ENCODE measurements at regions of chrX and their contacts with region 1.

Region 1: DNA sequence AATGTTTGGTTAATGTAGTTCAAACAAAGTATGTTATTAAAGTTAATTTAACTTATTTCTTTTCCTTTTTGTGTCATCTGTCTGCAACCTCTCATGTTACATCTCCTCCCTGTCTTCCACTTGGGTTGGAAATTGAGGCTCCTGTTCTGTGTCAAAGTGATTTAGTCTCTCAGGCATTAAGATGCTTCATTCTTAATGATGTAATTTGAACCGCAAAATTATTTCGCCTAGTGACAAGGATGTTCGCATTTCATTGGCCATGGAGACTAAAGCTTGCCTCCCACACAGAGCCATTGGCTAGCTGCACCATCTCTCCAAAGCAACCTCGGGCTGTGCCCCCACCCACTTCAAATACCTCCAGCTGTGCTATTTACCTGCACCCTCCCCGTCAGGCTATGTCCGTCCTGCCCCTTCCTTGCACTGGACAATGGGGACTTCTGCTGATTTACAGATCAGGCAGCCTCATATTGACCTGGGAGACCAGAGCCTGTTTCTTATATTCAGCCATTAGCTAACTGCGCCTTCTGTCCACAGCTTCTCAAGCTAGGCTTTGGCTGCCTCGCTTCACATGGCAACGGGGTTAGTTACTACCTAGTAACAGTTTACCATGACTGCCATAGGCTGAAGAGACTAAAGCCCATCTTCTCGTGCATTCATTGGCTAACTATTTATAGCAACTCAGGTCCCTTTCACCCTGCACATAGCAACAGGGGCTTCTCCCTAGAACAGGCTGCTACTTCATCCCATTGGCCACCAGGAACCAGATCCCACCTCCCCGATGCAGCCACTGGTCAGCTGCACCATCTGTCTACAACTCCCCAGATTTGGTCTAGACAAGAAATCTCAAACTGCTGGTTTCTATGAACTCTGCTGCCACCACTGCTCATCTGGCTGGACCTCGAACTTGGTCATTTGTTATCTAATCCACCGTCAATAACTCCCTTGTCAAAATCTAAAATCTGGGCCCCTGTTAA is 8.6 kb upstream of the ZNF157 start:
- ATAC-seq: peak; percentile 89 to 93 (median 92)
- H3K4me3 ChIP-seq: peak overlapping the region; percentile 32 to 39 (median 39)
- H3K27ac ChIP-seq: peak overlapping the region; percentile 60 to 96
- H3K4me1 ChIP-seq: peaks cover 10 to 13% of the 10 kb centered on the region in 2 donors

Region 2: GRCh38 chrX:47233337-47234113 is 128.3 kb before region 1 on chrX:
- in situ Hi-C with region 1: loop called in 1 of 9 experiments (anchors 25 kb)
- ATAC-seq: peak; percentile 85 to 92 (median 91)
- H3K4me3 ChIP-seq: peak overlapping the region; percentile 82 to 94 (median 89)
- H3K27ac ChIP-seq: peak overlapping the region; percentile 98
- H3K4me1 ChIP-seq: peaks cover 8 to 23% of the 10 kb centered on the region in 2 donors

Measured in motor neuron (in vitro differentiated cells).